Uterus (tissue), 4 donors: ENCODE measurements at regions of chr1 and their contacts with region 1.

Region 1: DNA sequence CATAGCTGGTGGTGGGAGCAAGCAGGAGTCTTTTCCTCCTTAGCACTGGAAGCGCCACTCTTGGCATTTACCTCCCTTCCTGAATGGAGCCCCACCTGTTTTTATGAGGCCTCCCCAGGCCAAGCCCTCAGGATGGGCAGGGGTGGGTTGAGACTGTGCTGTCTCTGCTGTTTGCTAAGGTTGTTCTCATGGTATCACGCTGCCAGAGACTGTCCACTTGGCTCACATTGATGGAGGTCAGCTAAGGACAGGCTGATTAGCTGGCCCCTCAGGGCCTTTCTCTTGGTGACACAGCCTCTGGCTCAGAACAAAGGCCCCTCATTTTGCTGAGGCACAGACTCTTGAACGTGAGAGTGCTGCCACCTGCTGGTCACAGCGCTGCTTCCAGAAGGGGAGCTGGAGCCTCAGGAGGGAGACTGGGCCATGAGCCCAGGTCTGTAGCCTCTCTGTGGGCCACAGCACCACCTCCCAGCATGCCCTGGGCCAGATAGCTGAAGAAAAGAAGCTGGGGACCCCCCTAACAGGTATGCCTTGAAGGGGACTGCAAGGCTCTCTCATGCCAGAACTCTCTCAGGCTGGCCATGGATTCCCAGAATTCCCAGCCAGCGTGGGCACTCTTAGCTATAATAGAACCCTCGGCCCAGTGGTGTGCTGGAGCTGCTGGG is 85.6 kb downstream of the CD58 start:
- DNase-seq: peak; percentile 75 to 78
- H3K4me3 ChIP-seq: no peak overlapping the region
- H3K27ac ChIP-seq: no peak overlapping the region
- H3K4me1 ChIP-seq: no peaks in the 10 kb centered on the region
- H3K27me3 ChIP-seq: no peaks in the 10 kb centered on the region
- CTCF ChIP-seq: peak; percentile 77 to 83 (median 80)
- POLR2A ChIP-seq: no peak

Region 2: DNA sequence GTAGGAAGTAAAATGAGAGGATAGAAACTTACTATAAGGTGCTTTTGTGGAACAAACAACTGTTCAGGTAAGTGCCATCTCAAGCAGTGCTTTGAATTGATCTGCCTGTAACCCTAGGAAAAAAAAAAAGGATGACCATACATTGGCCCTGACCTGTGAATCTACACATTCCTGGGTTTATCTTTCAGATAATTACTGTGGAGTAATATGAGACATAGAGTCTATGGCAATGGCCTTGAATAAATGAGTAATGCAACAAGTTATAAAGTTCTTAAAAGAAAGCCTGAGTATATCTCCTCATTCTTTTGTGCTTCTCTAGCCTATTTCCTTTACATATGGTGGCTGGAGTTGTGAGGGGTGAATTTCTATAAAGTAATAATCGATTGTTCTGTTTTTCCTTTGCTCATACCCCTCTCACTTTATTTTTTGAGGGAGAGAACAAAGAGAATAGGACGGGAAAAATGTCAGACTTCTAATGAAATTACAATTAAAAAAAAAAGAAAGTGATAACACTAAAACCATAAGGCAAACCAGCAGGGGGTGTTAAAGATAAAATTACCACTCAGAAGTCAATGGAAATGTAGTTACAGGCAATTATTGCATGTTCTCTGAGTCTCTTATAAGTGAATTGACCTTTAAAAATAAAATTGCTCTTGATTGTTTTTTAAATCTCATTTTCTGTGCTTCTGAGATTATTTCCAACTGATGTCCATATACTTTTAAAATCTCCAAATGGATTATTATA is 124.6 kb before region 1 on chr1:
- intact Hi-C with region 1: loop called (anchors 10 kb)
- DNase-seq: no peak
- H3K4me3 ChIP-seq: no peak overlapping the region
- H3K27ac ChIP-seq: no peak overlapping the region
- H3K4me1 ChIP-seq: no peaks in the 10 kb centered on the region
- H3K27me3 ChIP-seq: no peaks in the 10 kb centered on the region
- CTCF ChIP-seq: peak in 3 of 4 experiments; percentile 24 to 45 (median 42)
- POLR2A ChIP-seq: no peak